Posterior vena cava (tissue), 2 donors: ENCODE measurements at regions of chr17 and their contacts with region 1.

Region 1: DNA sequence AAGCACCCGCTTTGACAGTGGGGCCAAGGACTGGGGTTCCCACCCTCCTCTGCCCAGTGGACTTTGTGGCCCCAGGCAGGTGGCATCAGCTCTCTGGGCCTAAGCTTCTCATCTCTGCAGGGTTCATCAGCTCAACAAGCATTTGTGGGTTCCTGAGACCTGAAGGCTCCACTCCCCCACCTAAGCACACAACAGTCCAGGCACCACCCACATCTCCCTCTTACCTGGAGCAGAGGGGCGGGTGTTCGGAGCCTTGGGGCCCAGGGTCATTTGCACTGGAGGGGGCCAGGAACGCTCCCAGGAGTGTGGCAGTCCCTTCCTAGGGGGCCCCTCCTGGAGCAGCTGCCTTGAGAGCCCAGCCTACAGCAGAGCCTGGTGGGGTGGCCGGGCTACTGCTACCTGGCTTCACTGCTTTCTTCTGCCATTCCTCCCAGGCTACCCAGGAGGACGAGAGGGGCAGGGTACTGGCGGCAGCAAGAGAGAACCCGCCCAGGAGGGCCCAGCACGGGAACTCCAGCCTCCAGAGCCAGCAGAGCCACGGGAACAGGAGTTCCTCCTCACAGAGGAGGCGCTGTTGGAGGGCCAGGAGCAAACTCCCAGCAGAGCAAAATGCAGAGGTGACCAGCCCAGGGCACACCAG is 34.9 kb upstream of the SLC38A10 start:
- DNase-seq: no peak

Region 2: GRCh38 chr17:81090361-81091136 is 239.5 kb before region 1 on chr17:
- intact Hi-C with region 1: no loop called
- DNase-seq: peak; percentile 93

Region 3: DNA sequence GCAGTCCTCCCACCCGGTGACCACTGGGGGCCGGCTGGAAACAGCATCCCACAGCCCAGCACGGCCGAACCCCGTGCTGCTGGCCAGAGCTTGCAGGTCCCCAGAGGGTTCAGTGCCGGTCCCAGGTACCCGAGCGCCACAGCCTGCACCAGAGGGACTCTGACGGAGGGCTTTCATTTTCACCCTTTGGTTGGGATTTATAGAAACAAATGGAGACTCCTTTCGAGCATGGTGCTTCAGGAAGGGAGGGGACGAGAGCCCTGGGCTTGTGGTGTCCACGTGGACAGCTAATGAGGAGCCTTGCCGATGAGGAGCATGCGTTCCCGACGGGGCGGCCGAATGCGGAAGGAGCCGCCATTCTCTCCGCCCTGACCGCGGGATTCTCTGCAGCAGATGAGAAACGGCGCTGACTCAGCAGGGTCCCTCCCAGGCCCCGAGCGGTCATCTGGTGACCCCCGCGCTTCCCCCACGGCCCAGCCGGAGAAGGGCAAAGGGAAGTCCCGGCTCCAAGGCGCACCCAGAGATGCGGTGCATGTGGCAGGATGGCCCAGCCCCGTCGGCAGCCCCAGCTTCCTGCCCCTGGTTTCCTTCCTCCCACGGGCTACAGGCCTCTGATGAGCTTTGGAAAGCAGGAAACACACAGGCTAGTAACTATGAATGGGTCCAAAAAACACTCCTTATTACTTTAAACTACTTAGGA is 44.7 kb before region 1 on chr17:
- intact Hi-C with region 1: no loop called
- DNase-seq: peak; percentile 96

Region 4: DNA sequence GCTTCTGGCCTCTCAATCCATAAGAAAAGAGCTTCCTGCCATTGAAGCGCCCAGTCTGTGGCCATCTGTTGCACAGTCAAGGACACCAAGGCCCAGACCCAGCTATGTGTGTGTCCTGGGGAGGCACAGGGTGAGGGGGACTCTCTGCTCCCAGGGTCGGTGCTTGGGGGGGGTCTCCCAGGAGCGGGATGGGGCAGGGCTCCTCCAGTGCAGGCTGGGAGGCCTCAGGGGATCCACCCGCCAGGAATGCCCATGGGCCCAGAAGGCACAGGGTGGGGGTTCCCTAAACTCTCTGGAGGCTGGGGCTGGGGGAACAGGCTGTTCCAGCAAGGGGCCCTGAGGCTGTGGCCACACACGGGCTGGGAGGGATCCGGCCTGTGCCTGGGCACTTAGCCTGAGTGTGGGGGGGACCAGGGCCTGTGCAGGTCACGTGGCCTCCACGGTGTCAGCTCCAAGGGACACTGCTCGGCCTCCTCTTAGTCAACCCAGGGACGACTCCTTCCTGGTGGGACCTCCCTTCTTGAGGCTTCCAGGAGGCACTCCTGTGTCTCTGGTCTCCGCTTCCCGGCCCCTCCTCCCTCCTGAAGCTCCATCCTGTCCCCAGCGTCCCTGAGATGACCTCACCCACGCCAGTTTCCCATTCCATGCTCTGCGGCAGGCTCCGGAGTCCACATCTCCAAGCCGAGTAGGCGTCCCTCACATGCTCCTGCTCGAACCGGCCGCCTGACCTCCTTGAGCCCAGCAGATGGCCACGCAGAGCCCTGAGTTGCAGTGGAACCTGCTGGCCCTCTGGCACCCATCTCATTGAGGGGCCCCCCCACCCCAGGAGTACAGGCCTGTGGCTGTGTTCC is 42.1 kb after region 1 on chr17:
- intact Hi-C with region 1: loop called in 1 of 2 experiments (anchors 1 kb)
- DNase-seq: no peak

Region 5: DNA sequence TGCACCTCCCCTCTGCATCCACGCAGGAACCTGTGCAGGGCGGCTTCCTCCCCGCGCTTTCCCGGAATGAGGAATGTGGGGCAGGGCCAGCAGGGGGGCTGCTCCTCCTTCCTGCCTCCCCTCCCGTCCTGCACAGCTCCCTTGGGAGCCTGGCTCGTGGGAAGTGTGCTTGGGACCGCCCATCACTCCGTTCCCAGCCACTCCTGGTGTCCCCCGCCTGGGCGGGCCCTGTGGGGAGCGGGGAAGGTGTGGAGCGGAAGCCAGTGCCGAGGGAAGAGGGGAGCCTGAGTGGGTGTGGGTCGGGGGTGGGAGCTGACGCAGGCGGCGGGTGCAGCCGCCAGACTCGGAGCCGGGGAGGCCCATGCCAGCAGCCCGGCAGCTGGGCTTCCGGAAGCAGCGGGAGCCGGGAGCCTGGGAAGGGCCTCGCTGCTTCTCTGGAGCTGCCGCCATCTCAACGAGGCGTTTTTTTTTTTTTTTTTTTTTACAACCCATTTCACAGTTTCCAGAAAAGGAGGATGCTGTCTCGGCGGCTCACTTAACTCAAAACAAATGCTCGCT is 89.4 kb after region 1 on chr17:
- intact Hi-C with region 1: no loop called
- DNase-seq: peak; percentile 98

Region 6: DNA sequence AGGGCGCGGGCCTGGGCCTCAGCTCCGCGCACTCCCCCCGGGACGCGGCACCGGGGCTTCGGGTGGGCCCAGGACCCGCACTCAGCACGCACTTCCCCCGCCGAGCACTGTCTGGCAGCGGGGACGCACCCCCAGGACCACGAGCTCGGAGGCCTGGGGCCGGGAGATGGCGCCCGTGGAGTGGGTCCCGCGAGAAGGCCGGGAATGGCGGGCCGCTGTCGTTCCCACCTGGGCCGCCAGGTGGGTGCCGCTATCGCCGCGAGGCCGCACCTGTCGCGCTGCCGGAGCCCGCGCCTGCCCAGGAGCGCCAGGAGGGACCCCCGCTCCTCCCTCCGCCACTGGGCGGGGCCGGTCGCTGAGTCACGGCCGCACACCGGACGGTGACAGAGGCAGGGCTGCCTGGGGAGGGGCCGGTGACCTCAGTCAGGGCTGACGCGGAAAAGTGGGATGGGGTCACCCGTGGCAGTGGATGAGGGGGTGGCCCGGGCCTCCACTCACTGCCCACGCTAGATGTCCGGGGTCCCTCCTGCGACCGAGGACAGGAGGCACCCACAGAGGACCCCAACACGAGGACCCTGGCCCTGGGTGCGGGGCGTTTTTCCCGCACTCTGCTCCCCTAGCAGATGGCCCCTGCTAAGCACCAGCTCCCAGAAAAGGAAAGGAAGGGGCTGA is 189.4 kb after region 1 on chr17:
- intact Hi-C with region 1: no loop called
- DNase-seq: no peak